IMR-90 (cell line): ENCODE measurements at regions of chr14 and their contacts with region 1.

Region 1: DNA sequence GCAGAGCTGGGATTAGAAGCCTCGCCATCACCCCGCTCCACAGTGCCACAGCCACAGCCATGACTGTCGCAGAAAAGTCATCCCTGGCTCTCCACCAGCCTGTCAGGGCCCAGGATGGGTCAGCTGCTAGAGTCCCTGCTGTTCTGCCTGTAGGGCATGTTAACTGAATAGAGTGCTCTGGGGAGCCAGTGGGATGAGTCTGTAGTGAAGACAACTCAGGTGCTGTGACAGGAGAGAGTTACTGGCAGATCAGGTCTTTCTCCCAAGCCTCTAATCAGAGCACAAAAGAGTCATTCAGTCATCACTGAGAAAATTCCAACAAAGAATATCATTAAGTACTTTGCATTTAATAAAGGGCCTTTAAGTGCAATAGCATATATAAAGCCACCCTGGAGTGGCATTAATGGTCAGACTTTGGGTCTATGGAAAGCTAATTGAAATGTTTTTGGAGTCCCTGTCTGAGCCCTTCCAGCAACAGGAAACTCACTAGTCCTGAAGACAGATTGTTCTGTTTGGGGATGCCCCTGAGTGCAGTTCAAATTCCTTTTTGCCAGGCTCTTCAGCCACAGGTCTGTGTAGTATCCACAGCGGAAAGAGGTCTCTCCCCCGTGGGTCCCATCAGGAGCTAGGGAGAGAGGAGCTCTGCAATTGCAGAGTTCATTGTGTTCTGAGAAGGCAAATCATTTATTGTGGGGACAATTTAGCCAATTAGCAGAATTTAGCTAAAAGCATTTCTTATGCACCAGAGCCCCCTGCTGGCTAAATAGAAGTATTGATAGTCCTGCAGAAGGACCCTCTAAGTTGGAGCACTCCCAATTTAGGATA is 45.2 kb upstream of the C14orf132 start:
- DNase-seq: peak; percentile 53
- ATAC-seq: peak; percentile 82
- H3K4me3 ChIP-seq: no peak overlapping the region
- H3K27ac ChIP-seq: no peak overlapping the region
- H3K4me1 ChIP-seq: no peaks in the 10 kb centered on the region
- H3K27me3 ChIP-seq: peaks cover 18% of the 10 kb centered on the region
- CTCF ChIP-seq: peak; percentile 89
- POLR2A ChIP-seq: no peak
- RAD21 ChIP-seq: peak; percentile 88

Region 2: GRCh38 chr14:94423453-94424056 is 1570.4 kb before region 1 on chr14:
- CTCF ChIA-PET with region 1: no interaction called
- POLR2A ChIA-PET with region 1: no interaction called
- dilution Hi-C with region 1: no loop called
- in situ Hi-C with region 1: no loop called
- intact Hi-C with region 1: loop called (anchors 10 kb)
- DNase-seq: peak; percentile 59
- ATAC-seq: peak; percentile 83
- H3K4me3 ChIP-seq: no peak overlapping the region
- H3K27ac ChIP-seq: no peak overlapping the region
- H3K4me1 ChIP-seq: no peaks in the 10 kb centered on the region
- H3K27me3 ChIP-seq: peaks cover 11% of the 10 kb centered on the region
- CTCF ChIP-seq: peak; percentile 66
- POLR2A ChIP-seq: no peak
- RAD21 ChIP-seq: peak; percentile 48

Region 3: GRCh38 chr14:95425369-95426115 is 568.4 kb before region 1 on chr14:
- CTCF ChIA-PET with region 1: no interaction called
- POLR2A ChIA-PET with region 1: no interaction called
- dilution Hi-C with region 1: no loop called
- in situ Hi-C with region 1: loop called (anchors 10 kb)
- intact Hi-C with region 1: loop called (anchors 5 kb)
- DNase-seq: no peak
- ATAC-seq: no peak
- H3K4me3 ChIP-seq: no peak overlapping the region
- H3K27ac ChIP-seq: no peak overlapping the region
- H3K4me1 ChIP-seq: no peaks in the 10 kb centered on the region; the same call in 1 of the 2 replicates
- H3K27me3 ChIP-seq: no peaks in the 10 kb centered on the region
- CTCF ChIP-seq: no peak
- POLR2A ChIP-seq: no peak
- RAD21 ChIP-seq: no peak

Region 4: GRCh38 chr14:95442633-95443021 is 551.4 kb before region 1 on chr14:
- CTCF ChIA-PET with region 1: no interaction called
- POLR2A ChIA-PET with region 1: no interaction called
- dilution Hi-C with region 1: no loop called
- in situ Hi-C with region 1: loop called (anchors 10 kb)
- intact Hi-C with region 1: loop called (anchors 1 kb)
- DNase-seq: peak; percentile 76
- ATAC-seq: peak; percentile 95
- H3K4me3 ChIP-seq: no peak overlapping the region
- H3K27ac ChIP-seq: no peak overlapping the region
- H3K4me1 ChIP-seq: peaks cover 5% of the 10 kb centered on the region
- H3K27me3 ChIP-seq: no peaks in the 10 kb centered on the region
- CTCF ChIP-seq: peak; percentile 83
- POLR2A ChIP-seq: no peak
- RAD21 ChIP-seq: peak; percentile 95

Region 5: GRCh38 chr14:95561001-95561412 is 433.0 kb before region 1 on chr14:
- CTCF ChIA-PET with region 1: interaction called, 4 read pairs
- POLR2A ChIA-PET with region 1: no interaction called
- dilution Hi-C with region 1: no loop called
- in situ Hi-C with region 1: loop called (anchors 10 kb)
- intact Hi-C with region 1: loop called (anchors 1 kb)
- DNase-seq: peak; percentile 82
- ATAC-seq: peak; percentile 88
- H3K4me3 ChIP-seq: no peak overlapping the region
- H3K27ac ChIP-seq: no peak overlapping the region
- H3K4me1 ChIP-seq: no peaks in the 10 kb centered on the region
- H3K27me3 ChIP-seq: peaks cover 7% of the 10 kb centered on the region
- CTCF ChIP-seq: peak; percentile 98
- POLR2A ChIP-seq: no peak
- RAD21 ChIP-seq: peak; percentile 96

Region 6: DNA sequence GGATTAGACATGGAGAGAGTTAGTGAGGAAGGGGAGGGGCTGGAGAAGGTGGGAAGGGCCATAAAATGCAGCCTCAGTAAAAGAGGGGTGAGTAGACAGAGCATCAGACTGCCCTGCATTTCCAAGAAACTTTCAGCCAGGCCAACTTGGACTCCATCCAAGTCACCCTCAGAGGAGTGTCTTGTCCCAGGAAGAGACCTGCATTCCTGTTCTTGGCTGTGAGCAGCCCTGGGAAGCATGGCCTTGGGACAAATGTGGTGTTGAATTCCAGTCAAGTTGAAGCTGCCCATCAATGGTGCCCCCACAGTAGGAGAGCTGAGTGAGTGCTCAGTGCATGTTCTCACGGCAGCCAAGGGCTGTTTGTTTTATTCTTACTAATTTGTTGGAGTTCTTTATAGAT is 152.3 kb before region 1 on chr14:
- CTCF ChIA-PET with region 1: no interaction called
- POLR2A ChIA-PET with region 1: no interaction called
- dilution Hi-C with region 1: no loop called
- in situ Hi-C with region 1: no loop called
- intact Hi-C with region 1: no loop called
- DNase-seq: no peak
- ATAC-seq: no peak
- H3K4me3 ChIP-seq: no peak overlapping the region
- H3K27ac ChIP-seq: no peak overlapping the region
- H3K4me1 ChIP-seq: no peaks in the 10 kb centered on the region
- H3K27me3 ChIP-seq: no peaks in the 10 kb centered on the region
- CTCF ChIP-seq: no peak
- POLR2A ChIP-seq: no peak
- RAD21 ChIP-seq: no peak

Region 7: GRCh38 chr14:96117100-96117897 is 123.3 kb after region 1 on chr14:
- CTCF ChIA-PET with region 1: no interaction called
- POLR2A ChIA-PET with region 1: no interaction called
- dilution Hi-C with region 1: no loop called
- in situ Hi-C with region 1: no loop called
- intact Hi-C with region 1: no loop called
- DNase-seq: peak; percentile 54
- ATAC-seq: peak; percentile 3; the same call in 1 of the 2 replicates
- H3K4me3 ChIP-seq: no peak overlapping the region
- H3K27ac ChIP-seq: peak overlapping the region; percentile 90
- H3K4me1 ChIP-seq: peaks cover 26% of the 10 kb centered on the region
- H3K27me3 ChIP-seq: no peaks in the 10 kb centered on the region
- CTCF ChIP-seq: 0 out of 2 replicates have a peak, but pooled peaks have one; percentile 5
- POLR2A ChIP-seq: no peak
- RAD21 ChIP-seq: peak; percentile 23; the same call in 1 of the 2 replicates

Region 8: DNA sequence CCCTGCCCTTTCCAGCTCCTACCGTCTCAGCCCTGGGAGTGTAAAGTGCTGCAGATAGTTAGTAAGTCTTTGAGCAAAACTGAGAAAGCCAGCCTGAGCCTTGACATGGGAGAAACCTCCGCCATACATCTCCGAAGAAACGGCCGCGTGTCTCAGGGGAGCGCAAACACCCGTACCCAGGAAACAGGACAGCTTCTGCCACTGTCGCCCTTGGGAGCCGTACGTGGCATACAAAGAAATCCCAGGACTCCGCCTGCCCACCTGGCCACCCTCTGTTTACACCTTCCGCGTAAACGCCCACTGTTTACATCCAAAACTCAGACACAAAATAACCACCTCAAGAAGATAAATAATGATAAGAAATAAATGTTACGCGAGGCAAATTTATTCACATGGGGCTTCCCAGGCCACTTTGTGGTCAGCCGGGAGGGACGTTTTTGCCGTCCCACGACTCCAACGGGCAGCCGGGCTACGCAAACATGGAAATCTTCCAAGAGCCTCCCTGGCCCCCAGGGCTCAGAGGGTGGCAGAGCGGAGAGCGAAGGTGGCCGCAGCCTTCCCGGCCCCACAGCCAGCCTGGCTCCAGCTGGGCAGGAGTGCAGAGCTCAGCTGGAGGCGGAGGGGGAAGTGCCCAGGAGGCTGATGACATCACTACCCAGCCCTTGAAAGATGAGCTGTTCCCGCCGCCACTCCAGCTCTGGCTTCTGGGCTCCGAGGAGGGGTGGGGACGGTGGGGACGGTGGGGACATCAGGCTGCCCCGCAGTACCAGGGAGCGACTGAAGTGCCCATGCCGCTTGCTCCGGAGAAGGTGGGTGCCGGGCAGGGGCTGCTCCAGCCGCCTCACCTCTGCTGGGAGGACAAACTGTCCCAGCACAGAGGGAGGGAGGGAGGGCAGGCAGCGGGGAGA is 210.4 kb after region 1 on chr14 and contains the start of gene BDKRB2:
- CTCF ChIA-PET with region 1: no interaction called
- POLR2A ChIA-PET with region 1: no interaction called
- dilution Hi-C with region 1: no loop called
- in situ Hi-C with region 1: no loop called
- intact Hi-C with region 1: loop called (anchors 10 kb)
- DNase-seq: peak; percentile 92
- ATAC-seq: peak; percentile 86
- H3K4me3 ChIP-seq: peak within 1 kb of the TSS; percentile 88
- H3K27ac ChIP-seq: peak within 1 kb of the TSS; percentile 97
- H3K4me1 ChIP-seq: peaks cover 22% of the 10 kb centered on the region
- H3K27me3 ChIP-seq: no peaks in the 10 kb centered on the region
- CTCF ChIP-seq: no peak
- POLR2A ChIP-seq: peak; percentile 93
- RAD21 ChIP-seq: peak; percentile 42
- total RNA-seq, gene BDKRB2: 60.5 and 73.1 TPM in 2 replicates

Region 9: GRCh38 chr14:96424109-96424989 is 430.4 kb after region 1 on chr14:
- CTCF ChIA-PET with region 1: no interaction called
- POLR2A ChIA-PET with region 1: no interaction called
- dilution Hi-C with region 1: no loop called
- in situ Hi-C with region 1: no loop called
- intact Hi-C with region 1: loop called (anchors 1 kb)
- DNase-seq: peak; percentile 74
- ATAC-seq: peak; percentile 96
- H3K4me3 ChIP-seq: peak overlapping the region; percentile 33
- H3K27ac ChIP-seq: no peak overlapping the region
- H3K4me1 ChIP-seq: peaks cover 2% of the 10 kb centered on the region; the same call in 1 of the 2 replicates
- H3K27me3 ChIP-seq: peaks cover 1% of the 10 kb centered on the region; the same call in 1 of the 2 replicates
- CTCF ChIP-seq: peak; percentile 90
- POLR2A ChIP-seq: no peak
- RAD21 ChIP-seq: peak; percentile 88